ENCODE measurements at regions of chr1 and their contacts with region 1.

Region 1: DNA sequence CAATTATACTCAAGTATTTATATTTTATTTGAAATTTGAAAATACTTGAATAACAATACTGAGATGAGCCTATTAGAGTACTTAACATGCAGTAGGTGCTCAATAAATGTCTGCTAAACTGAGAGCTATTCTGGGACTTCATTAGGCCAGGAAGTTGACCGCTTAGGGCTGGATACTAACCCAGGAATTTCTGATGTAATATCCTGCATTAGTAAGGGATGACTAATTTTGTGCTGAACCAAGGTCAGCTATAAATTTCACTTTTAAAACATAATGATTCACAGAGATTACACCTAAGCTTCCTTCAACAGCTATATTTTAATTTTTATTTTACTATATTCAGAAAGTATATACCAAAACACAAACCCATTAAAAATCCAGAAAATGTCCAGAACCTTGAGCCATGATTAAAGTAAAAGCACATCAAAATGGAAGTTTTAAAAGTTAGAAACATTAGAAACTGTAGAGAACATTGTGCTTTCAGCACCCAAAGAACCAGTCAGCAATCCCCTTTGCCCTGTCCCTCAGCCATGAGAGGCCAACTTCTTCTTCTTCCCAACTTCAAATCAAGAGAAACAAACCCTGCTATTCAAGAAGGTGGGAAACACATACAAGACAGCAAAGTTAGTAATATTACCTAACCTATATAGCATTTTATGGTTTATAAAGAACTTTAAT is 35.4 kb downstream of the WNT2B start:
- DNase-seq: peak; percentile 77
- ATAC-seq: peak; percentile 88
- H3K4me3 ChIP-seq: no peak overlapping the region
- H3K27ac ChIP-seq: peak overlapping the region; percentile 70; the same call in 1 of the 2 replicates
- H3K4me1 ChIP-seq: peaks cover 14% of the 10 kb centered on the region; the same call in 1 of the 2 replicates
- H3K27me3 ChIP-seq: no peaks in the 10 kb centered on the region
- CTCF ChIP-seq: no peak

Region 2: GRCh38 chr1:111755331-111756123 is 788.6 kb before region 1 on chr1 and contains the start of gene DDX20:
- CTCF ChIA-PET with region 1: interaction called, 12 read pairs
- POLR2A ChIA-PET with region 1: no interaction called
- in situ Hi-C with region 1: no loop called
- intact Hi-C with region 1: no loop called
- DNase-seq: peak; percentile 74
- ATAC-seq: peak; percentile 96
- H3K4me3 ChIP-seq: peak within 1 kb of the TSS; percentile 72 to 95
- H3K27ac ChIP-seq: peak within 1 kb of the TSS; percentile 86
- H3K4me1 ChIP-seq: peaks cover 3% of the 10 kb centered on the region; the same call in 1 of the 2 replicates
- H3K27me3 ChIP-seq: no peaks in the 10 kb centered on the region
- CTCF ChIP-seq: peak; percentile 92
- total RNA-seq, gene DDX20: 9.1 TPM

Region 3: GRCh38 chr1:112431038-112431437 is 113.1 kb before region 1 on chr1:
- CTCF ChIA-PET with region 1: no interaction called
- POLR2A ChIA-PET with region 1: interaction called, 10 read pairs
- in situ Hi-C with region 1: no loop called
- intact Hi-C with region 1: no loop called
- DNase-seq: no peak
- ATAC-seq: no peak
- H3K4me3 ChIP-seq: no peak overlapping the region
- H3K27ac ChIP-seq: no peak overlapping the region
- H3K4me1 ChIP-seq: no peaks in the 10 kb centered on the region
- H3K27me3 ChIP-seq: no peaks in the 10 kb centered on the region
- CTCF ChIP-seq: no peak

Region 4: GRCh38 chr1:112509005-112509659 is 35.0 kb before region 1 on chr1:
- CTCF ChIA-PET with region 1: no interaction called
- POLR2A ChIA-PET with region 1: interaction called, 13 read pairs
- in situ Hi-C with region 1: no loop called
- intact Hi-C with region 1: no loop called
- DNase-seq: no peak
- ATAC-seq: no peak
- H3K4me3 ChIP-seq: peak overlapping the region; percentile 50 to 65
- H3K27ac ChIP-seq: no peak overlapping the region
- H3K4me1 ChIP-seq: no peaks in the 10 kb centered on the region
- H3K27me3 ChIP-seq: no peaks in the 10 kb centered on the region
- CTCF ChIP-seq: no peak

Region 5: GRCh38 chr1:112522621-112523020 is 21.5 kb before region 1 on chr1:
- CTCF ChIA-PET with region 1: no interaction called
- POLR2A ChIA-PET with region 1: no interaction called
- in situ Hi-C with region 1: no loop called
- intact Hi-C with region 1: no loop called
- DNase-seq: no peak
- ATAC-seq: no peak
- H3K4me3 ChIP-seq: no peak overlapping the region
- H3K27ac ChIP-seq: no peak overlapping the region
- H3K4me1 ChIP-seq: no peaks in the 10 kb centered on the region
- H3K27me3 ChIP-seq: no peaks in the 10 kb centered on the region
- CTCF ChIP-seq: no peak

Measured in Panc1 (cell line).